ENCODE measurements at regions of chr1 and their contacts with region 1.

Region 1: GRCh38 chr1:67766141-67766978 is 66.9 kb downstream of the GNG12 start:
- DNase-seq: no peak
- H3K4me3 ChIP-seq: no peak overlapping the region
- H3K27ac ChIP-seq: peak overlapping the region; percentile 12 to 41 (median 29)
- H3K4me1 ChIP-seq: peaks cover 2 to 38% (median 7%) of the 10 kb centered on the region in 4 donors
- H3K27me3 ChIP-seq: no peaks in the 10 kb centered on the region
- CTCF ChIP-seq: peak; percentile 68 to 89 (median 81)
- EP300 ChIP-seq: no peak
- POLR2A ChIP-seq: no peak

Region 2: GRCh38 chr1:67832737-67833601 is 66.6 kb after region 1 on chr1 and contains the start of gene GNG12:
- in situ Hi-C with region 1: loop called in 1 of 4 experiments (anchors 10 kb)
- intact Hi-C with region 1: loop called (anchors 5 kb)
- DNase-seq: peak; percentile 75
- H3K4me3 ChIP-seq: peak within 1 kb of the TSS; percentile 56 to 86 (median 62)
- H3K27ac ChIP-seq: peak within 1 kb of the TSS; percentile 86 to 95 (median 90)
- H3K4me1 ChIP-seq: peaks cover 7 to 47% (median 19%) of the 10 kb centered on the region in 4 donors
- H3K27me3 ChIP-seq: peaks cover 4% of the 10 kb centered on the region
- CTCF ChIP-seq: no peak
- EP300 ChIP-seq: no peak
- POLR2A ChIP-seq: peak; percentile 39
- total RNA-seq, gene GNG12: 19.1 to 180 (median 112) TPM

Region 3: DNA sequence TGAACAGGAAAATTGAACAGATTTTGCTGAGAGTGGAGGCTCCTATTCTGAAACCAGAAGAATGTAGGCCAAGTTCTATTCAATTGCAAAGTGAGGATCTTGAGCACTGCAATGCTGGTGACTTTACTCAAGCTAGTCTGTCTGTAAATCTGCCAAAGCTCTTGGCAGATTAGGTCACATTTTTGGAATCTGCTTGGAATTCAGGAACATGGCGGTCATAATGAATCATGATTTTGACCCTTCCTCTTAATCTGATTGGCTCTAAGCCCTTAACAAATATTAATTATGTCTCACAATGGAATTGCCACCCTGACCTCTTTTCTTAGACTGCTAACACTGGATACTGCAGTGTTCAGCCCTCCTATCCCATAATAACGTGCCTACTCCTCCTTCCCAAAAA is 74.1 kb after region 1 on chr1:
- in situ Hi-C with region 1: loop called in 1 of 4 experiments (anchors 10 kb)
- intact Hi-C with region 1: no loop called
- DNase-seq: no peak
- H3K4me3 ChIP-seq: no peak overlapping the region
- H3K27ac ChIP-seq: no peak overlapping the region
- H3K4me1 ChIP-seq: peaks cover 0 to 13% (median 12%) of the 10 kb centered on the region in 4 donors
- H3K27me3 ChIP-seq: no peaks in the 10 kb centered on the region
- CTCF ChIP-seq: no peak
- EP300 ChIP-seq: no peak
- POLR2A ChIP-seq: no peak

Region 4: DNA sequence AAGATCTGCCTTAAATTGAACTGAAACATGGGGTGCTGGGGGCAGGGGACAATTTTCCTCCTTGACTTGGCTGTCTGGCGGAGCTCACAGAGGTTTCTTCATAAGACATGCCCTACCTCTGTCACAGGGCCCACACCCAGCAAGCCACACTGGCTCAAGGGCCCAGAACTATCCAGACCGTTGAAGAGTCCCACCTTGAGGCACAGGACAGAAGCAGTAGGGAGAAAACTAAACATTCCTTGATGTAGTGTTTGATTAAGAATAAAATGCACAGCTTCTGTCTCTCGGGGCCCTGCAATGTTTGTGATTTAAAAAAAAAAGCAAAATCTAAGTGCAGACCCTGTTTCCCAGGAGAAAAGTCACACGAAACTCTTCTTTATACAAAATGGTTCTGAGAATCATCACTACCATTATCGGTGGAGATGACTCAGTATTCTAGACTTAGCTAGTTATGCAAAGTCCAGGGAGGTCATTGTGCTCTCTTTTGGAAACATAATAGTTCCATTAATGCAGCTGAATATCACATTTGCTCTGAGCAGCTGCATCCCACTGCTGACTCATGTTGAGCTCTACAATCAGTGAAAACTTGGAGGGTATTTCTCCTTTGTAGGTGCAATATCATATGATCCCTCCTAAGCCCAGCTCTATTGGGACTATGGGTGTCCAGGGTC is 337.7 kb after region 1 on chr1:
- in situ Hi-C with region 1: loop called in 1 of 4 experiments (anchors 10 kb)
- intact Hi-C with region 1: no loop called
- DNase-seq: no peak
- H3K4me3 ChIP-seq: no peak overlapping the region
- H3K27ac ChIP-seq: no peak overlapping the region
- H3K4me1 ChIP-seq: peaks cover 0 to 31% (median 19%) of the 10 kb centered on the region in 4 donors
- H3K27me3 ChIP-seq: no peaks in the 10 kb centered on the region
- CTCF ChIP-seq: no peak
- EP300 ChIP-seq: no peak
- POLR2A ChIP-seq: no peak